ENCODE measurements at regions of chr18 and their contacts with region 1.

Region 1: DNA sequence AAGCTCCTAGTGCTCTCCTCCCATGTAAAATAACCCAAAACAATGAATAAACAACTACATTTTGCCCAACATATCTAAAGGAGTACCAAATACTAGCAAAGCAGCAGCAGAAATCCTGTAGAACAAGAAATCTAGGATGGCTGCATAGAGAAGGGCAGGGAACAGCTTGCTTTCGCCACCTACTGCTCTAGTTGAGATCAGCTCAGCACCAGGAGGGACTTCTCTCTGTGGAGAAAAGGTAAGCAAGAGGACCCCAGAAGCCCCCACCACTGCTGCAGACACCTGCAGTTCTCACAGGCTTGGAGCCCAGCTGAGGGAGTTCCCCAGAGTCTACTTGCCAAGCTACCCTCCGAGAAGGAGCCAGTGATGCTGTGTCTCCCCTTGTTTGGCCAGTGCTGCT is 243.0 kb upstream of the CHST9 start:
- DNase-seq: no peak
- ATAC-seq: no peak
- H3K4me3 ChIP-seq: no peak overlapping the region
- H3K27ac ChIP-seq: no peak overlapping the region
- H3K4me1 ChIP-seq: no peaks in the 10 kb centered on the region
- H3K27me3 ChIP-seq: no peaks in the 10 kb centered on the region
- CTCF ChIP-seq: no peak
- POLR2A ChIP-seq: no peak

Region 2: DNA sequence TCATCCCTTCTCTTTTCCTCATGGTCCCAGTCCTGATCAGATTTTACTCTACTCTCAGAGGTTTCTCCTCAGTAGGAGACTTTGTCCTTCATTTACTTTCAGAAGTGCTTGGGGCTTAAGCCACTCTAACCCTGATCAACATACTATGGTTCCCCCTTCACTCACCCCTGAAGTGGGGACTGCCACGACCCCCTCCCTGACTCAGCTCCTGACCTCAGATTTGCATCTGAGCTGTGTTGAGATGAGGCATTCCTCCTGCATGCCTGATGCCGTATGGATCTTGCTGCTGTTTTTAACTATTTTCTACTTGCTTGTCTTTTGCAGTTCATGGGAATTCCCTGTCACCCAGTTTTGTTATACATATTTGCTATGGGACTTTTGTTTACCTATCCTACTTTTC is 63.7 kb after region 1 on chr18:
- intact Hi-C with region 1: loop called in 1 of 2 experiments (anchors 10 kb)
- DNase-seq: no peak
- ATAC-seq: no peak
- H3K4me3 ChIP-seq: no peak overlapping the region
- H3K27ac ChIP-seq: no peak overlapping the region
- H3K4me1 ChIP-seq: no peaks in the 10 kb centered on the region
- H3K27me3 ChIP-seq: no peaks in the 10 kb centered on the region
- CTCF ChIP-seq: no peak
- POLR2A ChIP-seq: no peak

Measured in right lobe of liver (tissue), 6 donors.